Heart right ventricle (tissue), 16 donors: ENCODE measurements at regions of chr1 and their contacts with region 1.

Region 1: GRCh38 chr1:203504397-203505250 is 10.7 kb downstream of the OPTC start:
- DNase-seq: peak; percentile 74 to 88
- ATAC-seq: peak; percentile 30 to 73 (median 54)
- H3K4me3 ChIP-seq: no peak overlapping the region
- H3K27ac ChIP-seq: peak overlapping the region in 2 of 10 donors; percentile 0 to 29
- H3K4me1 ChIP-seq: peaks cover 15 to 50% (median 34%) of the 10 kb centered on the region in 9 donors
- H3K27me3 ChIP-seq: no peaks in the 10 kb centered on the region
- CTCF ChIP-seq: peak; percentile 74 to 94 (median 90)

Region 2: GRCh38 chr1:203558064-203558760 is 53.6 kb after region 1 on chr1:
- intact Hi-C with region 1: loop called in 7 of 10 experiments (anchors 1 to 5 kb)
- DNase-seq: peak; percentile 41 to 60
- ATAC-seq: peak; percentile 35 to 71 (median 58)
- H3K4me3 ChIP-seq: peak overlapping the region in 4 of 10 donors; percentile 14 to 18 (median 16)
- H3K27ac ChIP-seq: peak overlapping the region; percentile 53 to 98 (median 91)
- H3K4me1 ChIP-seq: peaks cover 22 to 71% (median 48%) of the 10 kb centered on the region in 9 donors
- H3K27me3 ChIP-seq: no peaks in the 10 kb centered on the region
- CTCF ChIP-seq: no peak

Region 3: DNA sequence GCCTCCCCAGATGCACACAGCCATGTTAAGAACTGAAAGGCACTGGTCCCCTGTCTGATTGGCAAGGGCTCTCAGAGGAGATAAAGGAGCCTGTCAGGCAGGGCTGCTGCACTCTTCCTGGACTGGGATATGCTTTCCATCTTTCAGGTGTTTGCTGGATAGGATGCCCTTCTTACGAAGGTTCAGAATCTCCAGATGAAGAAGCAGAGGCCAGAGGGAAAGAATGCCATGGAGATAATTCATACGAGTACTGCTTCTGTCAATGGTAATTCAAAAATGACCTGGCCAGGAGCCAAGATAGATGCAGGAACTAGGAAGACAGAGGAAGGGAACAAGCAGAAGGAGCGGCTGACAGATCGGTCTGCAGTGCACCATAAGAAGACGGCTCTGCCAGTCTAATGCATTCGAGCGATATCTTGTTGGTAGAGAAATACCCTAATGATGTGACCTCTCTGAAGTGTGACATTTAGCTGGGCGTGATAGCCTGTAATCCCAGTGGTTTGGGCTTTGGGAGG is 105.4 kb after region 1 on chr1:
- intact Hi-C with region 1: loop called in 5 of 10 experiments (anchors 5 kb)
- DNase-seq: no peak
- ATAC-seq: peak in 1 of 8 donors; percentile 34
- H3K4me3 ChIP-seq: no peak overlapping the region
- H3K27ac ChIP-seq: no peak overlapping the region
- H3K4me1 ChIP-seq: peaks cover 6 to 26% (median 15%) of the 10 kb centered on the region in 9 donors
- H3K27me3 ChIP-seq: no peaks in the 10 kb centered on the region
- CTCF ChIP-seq: no peak

Region 4: DNA sequence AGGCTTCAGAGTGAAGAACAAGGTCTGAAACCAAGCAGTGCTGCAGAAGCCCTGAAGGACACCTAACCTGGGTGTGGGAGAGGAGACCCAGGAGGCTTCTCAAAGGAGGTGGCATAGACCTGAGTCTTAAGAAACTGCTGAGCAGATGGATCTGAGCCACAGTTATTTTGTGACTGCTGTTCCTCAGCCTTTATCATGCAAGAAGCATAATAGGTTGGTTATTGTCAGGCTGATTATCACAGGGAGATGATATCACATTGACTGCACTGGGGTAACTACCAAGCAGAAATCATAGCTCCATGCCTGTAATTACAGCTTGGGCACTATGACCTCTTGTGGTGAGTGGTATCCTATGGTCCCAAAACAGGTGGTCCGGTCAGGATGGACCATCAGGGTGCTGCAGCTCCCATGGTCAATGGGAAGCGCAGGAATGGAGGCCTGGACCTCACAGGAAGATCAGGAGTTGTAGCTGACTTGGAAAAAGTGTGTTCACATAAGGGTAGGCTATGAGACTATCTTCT is 110.5 kb after region 1 on chr1:
- intact Hi-C with region 1: loop called in 4 of 10 experiments (anchors 5 kb)
- DNase-seq: no peak
- ATAC-seq: peak in 5 of 8 donors; percentile 44 to 62 (median 52)
- H3K4me3 ChIP-seq: no peak overlapping the region
- H3K27ac ChIP-seq: no peak overlapping the region
- H3K4me1 ChIP-seq: peaks cover 0 to 1% (median 0%) of the 10 kb centered on the region in 9 donors
- H3K27me3 ChIP-seq: no peaks in the 10 kb centered on the region
- CTCF ChIP-seq: peak in 6 of 9 donors; percentile 13 to 45 (median 36)

Region 5: GRCh38 chr1:203702130-203702577 is 197.5 kb after region 1 on chr1:
- intact Hi-C with region 1: loop called (anchors 1 to 5 kb)
- DNase-seq: no peak
- ATAC-seq: peak; percentile 46 to 74 (median 64)
- H3K4me3 ChIP-seq: no peak overlapping the region
- H3K27ac ChIP-seq: peak overlapping the region in 2 of 10 donors; percentile 6
- H3K4me1 ChIP-seq: peaks cover 0 to 21% (median 6%) of the 10 kb centered on the region in 9 donors
- H3K27me3 ChIP-seq: no peaks in the 10 kb centered on the region
- CTCF ChIP-seq: peak; percentile 57 to 90 (median 83)

Region 6: GRCh38 chr1:203769505-203770343 is 265.1 kb after region 1 on chr1:
- intact Hi-C with region 1: loop called in 1 of 10 experiments (anchors 10 kb)
- DNase-seq: peak; percentile 58 to 79
- ATAC-seq: peak; percentile 71 to 96 (median 88)
- H3K4me3 ChIP-seq: peak overlapping the region in 4 of 10 donors; percentile 13 to 33 (median 18)
- H3K27ac ChIP-seq: peak overlapping the region in 7 of 10 donors; percentile 37 to 68 (median 52)
- H3K4me1 ChIP-seq: peaks cover 0 to 25% (median 6%) of the 10 kb centered on the region in 9 donors
- H3K27me3 ChIP-seq: no peaks in the 10 kb centered on the region
- CTCF ChIP-seq: no peak

Region 7: DNA sequence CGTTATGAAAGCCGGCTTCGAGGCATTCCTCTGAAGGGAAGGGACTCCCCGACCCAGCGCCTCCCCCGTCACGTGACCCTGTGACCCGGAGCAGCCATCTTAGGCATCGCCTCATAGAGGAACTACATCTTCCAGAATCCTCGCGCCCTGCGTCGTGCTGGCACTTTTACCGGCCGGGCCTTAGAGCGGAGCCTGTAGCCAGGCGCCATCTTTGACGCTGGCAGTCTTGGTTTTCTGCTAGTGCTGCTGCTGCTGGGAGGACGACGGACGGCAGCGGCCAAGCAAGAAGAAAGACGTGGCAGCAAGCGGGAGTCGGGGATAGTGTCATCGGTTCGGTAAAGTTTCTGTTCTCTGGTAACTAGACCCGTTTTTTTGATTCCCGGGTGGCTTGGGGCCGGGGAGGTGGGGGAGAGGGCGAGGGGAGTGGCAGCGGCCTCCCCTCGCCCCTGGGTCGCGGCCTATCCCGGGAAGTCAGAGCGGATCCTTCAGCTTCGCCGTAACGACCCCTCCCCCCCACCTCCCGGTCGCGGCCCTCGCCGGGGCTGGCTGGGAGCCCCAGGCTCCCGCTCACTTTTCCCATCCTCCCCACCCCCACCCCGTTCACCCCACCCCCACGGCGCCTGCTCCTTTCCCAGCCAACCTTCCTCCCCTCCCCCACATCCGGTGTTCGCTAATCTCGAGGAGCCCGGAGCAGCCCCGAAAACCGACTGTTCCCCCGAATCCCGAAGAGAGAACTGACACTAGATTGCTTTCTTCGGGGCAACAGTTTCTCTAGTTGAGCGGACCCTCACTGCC is 291.0 kb after region 1 on chr1 and contains the starts of genes ZBED6 and ZC3H11A:
- intact Hi-C with region 1: loop called in 1 of 10 experiments (anchors 10 kb)
- DNase-seq: peak; percentile 98 to 99
- ATAC-seq: peak; percentile 97 to 99 (median 98)
- H3K4me3 ChIP-seq: peak within 1 kb of the TSS; percentile 50 to 89 (median 74)
- H3K27ac ChIP-seq: peak within 1 kb of the TSS; percentile 85 to 99 (median 97)
- H3K4me1 ChIP-seq: peaks cover 11 to 49% (median 44%) of the 10 kb centered on the region in 9 donors
- H3K27me3 ChIP-seq: no peaks in the 10 kb centered on the region
- CTCF ChIP-seq: no peak
- total RNA-seq, gene ZBED6: 11.2 to 19.4 (median 12.7) TPM
- total RNA-seq, gene ZC3H11A: 37.4 to 63.8 (median 41.9) TPM